Heart right ventricle (tissue), 16 donors: ENCODE measurements at regions of chr6 and their contacts with region 1.

Region 1: DNA sequence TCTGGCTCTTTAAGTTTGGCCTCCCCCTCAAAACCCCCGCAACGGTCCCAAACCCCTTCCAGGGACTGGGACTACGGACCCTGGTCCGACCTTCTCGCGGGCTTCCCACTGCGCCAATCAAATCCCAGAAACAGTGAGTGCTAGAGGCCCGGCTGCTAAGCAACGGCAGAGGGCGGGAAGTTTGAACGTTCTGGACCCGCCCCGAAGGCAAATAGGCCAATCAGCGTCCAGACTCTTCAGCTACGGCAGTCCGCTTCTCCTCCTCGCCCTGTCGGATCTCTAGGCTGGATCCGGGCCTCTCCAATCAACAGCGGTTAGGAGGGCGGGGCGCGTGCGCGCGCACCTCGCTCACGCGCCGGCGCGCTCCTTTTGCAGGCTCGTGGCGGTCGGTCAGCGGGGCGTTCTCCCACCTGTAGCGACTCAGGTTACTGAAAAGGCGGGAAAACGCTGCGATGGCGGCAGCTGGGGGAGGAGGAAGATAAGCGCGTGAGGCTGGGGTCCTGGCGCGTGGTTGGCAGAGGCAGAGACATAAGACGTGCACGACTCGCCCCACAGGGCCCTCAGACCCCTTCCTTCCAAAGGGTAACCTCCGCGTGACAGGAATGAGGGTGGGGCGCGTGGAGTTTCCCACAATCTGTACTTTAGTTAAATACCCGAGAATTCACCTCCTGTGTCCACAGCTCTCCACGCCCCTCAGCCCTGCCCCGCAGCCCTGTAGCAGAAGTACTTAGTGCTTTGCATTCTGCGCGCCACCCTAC is at the start of gene MSH5:
- DNase-seq: peak; percentile 97 to 99
- ATAC-seq: peak; percentile 90 to 96 (median 94)
- H3K4me3 ChIP-seq: peak within 1 kb of the TSS; percentile 56 to 94 (median 76)
- H3K27ac ChIP-seq: peak within 1 kb of the TSS in 9 of 10 donors; percentile 20 to 98 (median 66)
- H3K4me1 ChIP-seq: peaks cover 4 to 42% (median 38%) of the 10 kb centered on the region in 9 donors
- H3K27me3 ChIP-seq: no peaks in the 10 kb centered on the region
- CTCF ChIP-seq: no peak
- total RNA-seq, gene MSH5: 0.89 to 4.3 (median 2.6) TPM

Region 2: GRCh38 chr6:31615748-31616147 is 124.1 kb before region 1 on chr6:
- intact Hi-C with region 1: no loop called
- DNase-seq: no peak
- ATAC-seq: no peak
- H3K4me3 ChIP-seq: peak overlapping the region in 6 of 10 donors; percentile 19 to 49 (median 28)
- H3K27ac ChIP-seq: peak overlapping the region in 5 of 10 donors; percentile 26 to 86 (median 37)
- H3K4me1 ChIP-seq: peaks cover 0 to 13% (median 5%) of the 10 kb centered on the region in 9 donors
- H3K27me3 ChIP-seq: no peaks in the 10 kb centered on the region
- CTCF ChIP-seq: no peak

Region 3: DNA sequence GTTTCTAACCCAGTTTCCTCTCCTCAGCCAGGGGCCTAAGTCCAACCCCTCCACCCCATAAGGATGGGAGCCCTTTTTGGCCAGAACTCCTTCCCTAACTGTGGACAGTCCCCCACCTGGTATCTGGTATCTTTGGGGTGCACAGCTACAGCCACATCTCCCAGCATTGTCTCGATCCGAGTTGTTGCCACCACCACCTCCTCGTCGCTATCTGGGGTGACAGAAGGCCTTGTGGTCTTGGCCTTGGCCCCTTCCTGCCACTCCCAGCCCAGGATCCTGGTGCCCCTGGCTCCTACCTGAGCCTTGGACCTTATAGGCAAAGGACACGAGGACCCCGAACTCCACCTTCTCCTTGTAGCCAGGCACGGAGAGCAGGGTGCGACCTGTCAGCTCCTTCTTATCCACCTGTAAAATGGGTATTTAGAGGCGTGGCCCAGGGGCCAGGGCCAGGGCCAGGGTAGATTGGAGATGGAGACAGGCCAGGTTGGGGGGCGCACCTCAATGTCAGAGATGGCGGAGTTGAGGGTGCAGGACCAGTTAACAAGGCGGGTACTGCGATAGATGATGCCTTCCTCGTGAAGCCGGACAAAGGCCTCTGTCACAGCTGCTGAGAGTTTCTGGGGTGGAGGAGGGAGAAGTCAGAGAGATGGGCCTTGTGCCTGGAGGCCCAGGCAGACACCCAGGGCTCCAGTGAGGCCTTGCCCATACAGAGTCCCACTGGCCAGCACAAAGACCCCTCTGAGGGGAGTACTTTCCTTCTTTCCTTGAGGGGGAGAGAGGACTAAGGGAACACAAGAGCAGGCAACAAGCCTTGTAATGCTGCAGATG is 44.5 kb after region 1 on chr6:
- intact Hi-C with region 1: loop called in 1 of 10 experiments (anchors 5 kb)
- DNase-seq: no peak
- ATAC-seq: no peak
- H3K4me3 ChIP-seq: no peak overlapping the region
- H3K27ac ChIP-seq: no peak overlapping the region
- H3K4me1 ChIP-seq: no peaks in the 10 kb centered on the region
- H3K27me3 ChIP-seq: no peaks in the 10 kb centered on the region
- CTCF ChIP-seq: no peak

Region 4: GRCh38 chr6:31795616-31796298 is 55.9 kb after region 1 on chr6 and contains the start of gene VARS1:
- intact Hi-C with region 1: loop called in 2 of 10 experiments (anchors 1 to 10 kb)
- DNase-seq: peak; percentile 90 to 95
- ATAC-seq: peak; percentile 92 to 96 (median 94)
- H3K4me3 ChIP-seq: peak within 1 kb of the TSS; percentile 57 to 99 (median 86)
- H3K27ac ChIP-seq: peak within 1 kb of the TSS; percentile 84 to 99 (median 96)
- H3K4me1 ChIP-seq: peaks cover 5 to 39% (median 14%) of the 10 kb centered on the region in 9 donors
- H3K27me3 ChIP-seq: no peaks in the 10 kb centered on the region
- CTCF ChIP-seq: peak; percentile 65 to 94 (median 88)
- total RNA-seq, gene VARS1: 22.4 to 43.4 (median 29.5) TPM

Region 5: DNA sequence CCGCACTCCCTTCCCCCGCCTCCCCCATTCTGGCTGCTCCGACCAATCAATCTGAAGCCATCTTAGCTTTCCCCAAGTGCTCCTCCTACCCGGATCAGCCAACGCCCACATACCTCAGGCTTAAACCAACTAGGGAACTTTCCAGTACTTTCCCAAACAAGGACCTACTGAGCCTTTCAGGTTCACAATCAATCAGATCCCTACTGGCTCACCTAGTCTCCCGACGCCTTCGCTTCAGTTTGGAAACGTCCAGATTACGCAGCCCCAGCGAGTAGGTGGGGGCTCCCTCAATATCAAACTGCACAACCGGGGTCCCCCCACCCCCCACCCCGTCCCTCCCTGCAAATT is 74.8 kb after region 1 on chr6:
- intact Hi-C with region 1: loop called in 1 of 10 experiments (anchors 5 kb)
- DNase-seq: peak; percentile 93 to 98
- ATAC-seq: peak; percentile 79 to 89 (median 88)
- H3K4me3 ChIP-seq: peak overlapping the region; percentile 52 to 71 (median 64)
- H3K27ac ChIP-seq: peak overlapping the region; percentile 95 to 100 (median 99)
- H3K4me1 ChIP-seq: peaks cover 7 to 38% (median 26%) of the 10 kb centered on the region in 9 donors
- H3K27me3 ChIP-seq: no peaks in the 10 kb centered on the region
- CTCF ChIP-seq: no peak